Astrocyte of the cerebellum (primary cell): ENCODE measurements at regions of chr2 and their contacts with region 1.

Region 1: GRCh38 chr2:72851321-72851720 is 25.5 kb upstream of the EXOC6B start:
- DNase-seq: no peak
- H3K4me3 ChIP-seq: no peak overlapping the region
- CTCF ChIP-seq: no peak

Region 2: DNA sequence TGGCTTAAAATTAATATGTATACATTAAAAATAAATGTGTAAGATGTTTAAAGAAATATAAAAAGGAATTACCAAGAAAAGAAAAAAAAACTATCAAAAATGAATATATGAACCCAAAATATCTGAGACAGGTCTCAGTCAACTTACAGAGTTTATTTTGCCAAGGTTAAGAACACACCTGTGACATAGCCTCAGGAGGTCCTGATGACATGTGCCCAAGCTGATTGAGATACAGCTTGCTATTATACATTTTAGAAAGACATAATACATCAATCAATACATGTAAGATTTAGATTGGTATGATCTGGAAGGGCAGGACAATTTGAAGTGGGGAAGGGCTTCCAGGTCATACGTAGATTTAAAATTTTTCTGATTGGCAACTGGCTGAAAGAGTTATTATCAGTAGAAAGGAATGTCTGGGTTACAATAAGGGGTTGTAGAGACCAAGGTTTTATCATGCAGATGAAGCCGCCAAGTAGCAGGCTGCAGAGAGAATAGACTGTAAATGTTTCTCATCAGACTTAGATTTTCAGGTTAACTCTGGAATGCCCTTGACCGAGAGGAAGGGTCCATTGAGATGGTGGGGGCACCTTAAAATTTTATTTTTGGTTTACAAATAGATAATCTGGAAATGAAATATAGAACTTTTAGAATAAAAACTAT is 100.2 kb before region 1 on chr2:
- in situ Hi-C with region 1: loop called (anchors 5 kb)
- DNase-seq: no peak
- H3K4me3 ChIP-seq: no peak overlapping the region
- CTCF ChIP-seq: no peak

Region 3: GRCh38 chr2:72788756-72789155 is 62.6 kb before region 1 on chr2:
- in situ Hi-C with region 1: no loop called
- DNase-seq: peak; percentile 11
- H3K4me3 ChIP-seq: no peak overlapping the region
- CTCF ChIP-seq: no peak